Activated T-helper 1 cell treated with anti-CD3 and anti-CD28 coated beads, Interleukin-12 subunit alpha, Interleukin-12 subunit beta, Interleukin-2, Interleukin-4 antibody, amounts not matched to agents 30 ng/mL and 10 ng/mL and 1 ng/mL, durations not matched to agents 14 hours and 24 hours and 36 hours (primary cell): ENCODE measurements at regions of chr3 and their contacts with region 1.

Region 1: DNA sequence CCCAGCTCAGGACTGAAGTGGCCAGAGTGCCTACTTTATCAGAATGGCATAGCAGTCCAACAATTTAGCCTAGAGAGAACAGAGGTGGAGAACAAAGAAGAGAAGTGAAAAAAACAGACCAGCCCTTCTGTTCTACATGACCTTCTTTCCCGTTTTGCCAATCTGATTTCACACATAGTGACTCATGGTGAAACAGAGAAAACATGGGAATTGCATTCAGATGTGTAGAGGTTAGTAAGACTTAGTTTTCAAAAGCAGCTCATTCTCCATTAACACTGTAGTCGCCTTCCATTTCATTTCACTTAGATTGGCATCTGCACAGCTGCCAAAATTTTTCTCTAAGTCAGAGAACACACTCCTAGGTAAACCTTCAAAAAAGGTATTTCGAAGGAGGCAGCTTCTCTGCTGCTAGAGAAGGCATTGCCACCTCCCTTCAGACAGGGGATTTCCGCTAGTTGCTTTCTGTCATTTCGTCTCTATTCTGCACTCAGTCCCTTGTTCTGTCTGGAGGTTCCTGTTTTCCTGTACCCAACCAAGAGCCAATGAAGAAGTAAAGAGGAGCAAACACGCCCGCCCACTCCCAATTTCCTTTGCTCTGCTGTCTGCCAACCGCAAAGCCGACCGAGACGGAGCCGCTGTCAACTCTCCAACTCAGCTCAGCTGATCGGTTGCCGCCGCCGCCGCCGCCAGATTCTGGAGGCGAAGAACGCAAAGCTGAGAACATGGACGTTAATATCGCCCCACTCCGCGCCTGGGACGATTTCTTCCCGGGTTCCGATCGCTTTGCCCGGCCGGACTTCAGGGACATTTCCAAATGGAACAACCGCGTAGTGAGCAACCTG is at the start of gene ARL6IP5:
- DNase-seq: peak; percentile 89
- H3K4me3 Mint-ChIP-seq: peak within 1 kb of the TSS; percentile 98
- H3K27ac Mint-ChIP-seq: peak within 1 kb of the TSS; percentile 94
- H3K4me1 Mint-ChIP-seq: peaks cover 61% of the 10 kb centered on the region
- H3K27me3 Mint-ChIP-seq: no peaks in the 10 kb centered on the region
- total RNA-seq, gene ARL6IP5: 147 and 156 TPM in 2 replicates

Region 2: GRCh38 chr3:68771683-68772082 is 312.9 kb before region 1 on chr3:
- intact Hi-C with region 1: no loop called
- DNase-seq: no peak
- H3K4me3 Mint-ChIP-seq: no peak overlapping the region
- H3K27ac Mint-ChIP-seq: no peak overlapping the region
- H3K4me1 Mint-ChIP-seq: no peaks in the 10 kb centered on the region
- H3K27me3 Mint-ChIP-seq: no peaks in the 10 kb centered on the region

Region 3: GRCh38 chr3:69051756-69052471 is 32.6 kb before region 1 on chr3 and contains the start of gene TMF1:
- intact Hi-C with region 1: loop called (anchors 1 kb)
- DNase-seq: peak; percentile 96
- H3K4me3 Mint-ChIP-seq: peak within 1 kb of the TSS; percentile 97
- H3K27ac Mint-ChIP-seq: peak within 1 kb of the TSS; percentile 96
- H3K4me1 Mint-ChIP-seq: peaks cover 56% of the 10 kb centered on the region
- H3K27me3 Mint-ChIP-seq: peaks cover 1% of the 10 kb centered on the region
- total RNA-seq, gene TMF1: 43.0 and 43.1 TPM in 2 replicates

Region 4: GRCh38 chr3:69058180-69058946 is 26.2 kb before region 1 on chr3:
- intact Hi-C with region 1: loop called (anchors 1 kb)
- DNase-seq: peak; percentile 21
- H3K4me3 Mint-ChIP-seq: peak overlapping the region; percentile 25
- H3K27ac Mint-ChIP-seq: peak overlapping the region; percentile 90
- H3K4me1 Mint-ChIP-seq: peaks cover 38% of the 10 kb centered on the region
- H3K27me3 Mint-ChIP-seq: no peaks in the 10 kb centered on the region

Region 5: DNA sequence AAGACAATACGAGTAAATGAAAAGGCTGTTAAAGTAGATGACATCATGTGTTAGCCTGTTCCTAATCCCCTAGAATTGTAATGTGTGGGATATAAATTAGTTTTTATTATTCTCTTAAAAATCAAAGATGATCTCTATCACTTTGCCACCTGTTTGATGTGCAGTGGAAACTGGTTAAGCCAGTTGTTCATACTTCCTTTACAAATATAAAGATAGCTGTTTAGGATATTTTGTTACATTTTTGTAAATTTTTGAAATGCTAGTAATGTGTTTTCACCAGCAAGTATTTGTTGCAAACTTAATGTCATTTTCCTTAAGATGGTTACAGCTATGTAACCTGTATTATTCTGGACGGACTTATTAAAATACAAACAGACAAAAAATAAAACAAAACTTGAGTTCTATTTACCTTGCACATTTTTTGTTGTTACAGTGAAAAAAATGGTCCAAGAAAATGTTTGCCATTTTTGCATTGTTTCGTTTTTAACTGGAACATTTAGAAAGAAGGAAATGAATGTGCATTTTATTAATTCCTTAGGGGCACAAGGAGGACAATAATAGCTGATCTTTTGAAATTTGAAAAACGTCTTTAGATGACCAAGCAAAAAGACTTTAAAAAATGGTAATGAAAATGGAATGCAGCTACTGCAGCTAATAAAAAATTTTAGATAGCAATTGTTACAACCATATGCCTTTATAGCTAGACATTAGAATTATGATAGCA is 20.6 kb after region 1 on chr3:
- intact Hi-C with region 1: loop called (anchors 2 kb)
- DNase-seq: no peak
- H3K4me3 Mint-ChIP-seq: no peak overlapping the region
- H3K27ac Mint-ChIP-seq: no peak overlapping the region
- H3K4me1 Mint-ChIP-seq: peaks cover 36% of the 10 kb centered on the region
- H3K27me3 Mint-ChIP-seq: no peaks in the 10 kb centered on the region

Region 6: DNA sequence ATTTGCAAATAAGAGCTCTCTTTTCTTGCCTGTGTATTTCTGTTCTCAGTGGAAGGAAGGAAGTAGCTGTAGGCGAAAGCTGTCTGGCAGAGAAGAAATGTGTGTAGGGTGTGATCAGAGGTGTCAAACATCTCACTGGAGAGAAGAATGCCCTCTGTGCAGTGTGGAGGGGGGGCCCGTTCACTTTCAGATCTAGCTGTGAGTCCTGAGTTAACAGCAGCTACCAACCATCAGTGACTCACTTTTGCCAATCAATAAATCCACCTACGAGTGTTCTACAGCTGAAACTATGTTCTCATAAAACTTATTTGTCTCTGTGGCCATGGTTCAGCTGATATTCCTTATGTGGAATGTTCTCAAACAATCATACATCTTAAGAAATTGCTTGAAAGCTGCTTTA is 197.6 kb after region 1 on chr3:
- intact Hi-C with region 1: loop called (anchors 1 kb)
- DNase-seq: peak; percentile 12
- H3K4me3 Mint-ChIP-seq: peak overlapping the region; percentile 19
- H3K27ac Mint-ChIP-seq: peak overlapping the region; percentile 84
- H3K4me1 Mint-ChIP-seq: peaks cover 45% of the 10 kb centered on the region
- H3K27me3 Mint-ChIP-seq: no peaks in the 10 kb centered on the region

Region 7: GRCh38 chr3:69433969-69434325 is 349.4 kb after region 1 on chr3:
- intact Hi-C with region 1: loop called (anchors 2 kb)
- DNase-seq: no peak
- H3K4me3 Mint-ChIP-seq: no peak overlapping the region
- H3K27ac Mint-ChIP-seq: peak overlapping the region; percentile 54
- H3K4me1 Mint-ChIP-seq: peaks cover 51% of the 10 kb centered on the region
- H3K27me3 Mint-ChIP-seq: no peaks in the 10 kb centered on the region